Activated CD4-positive, alpha-beta T cell treated with anti-CD3 and anti-CD28 coated beads, Interleukin-2, amount 10 ng/mL, durations not matched to agents 24 days and 14 days (primary cell): ENCODE measurements at regions of chr19 and their contacts with region 1.

Region 1: GRCh38 chr19:6801485-6802086 is 29.1 kb downstream of the VAV1 start:
- DNase-seq: peak; percentile 93
- H3K4me3 Mint-ChIP-seq: peak overlapping the region; percentile 93
- H3K27ac Mint-ChIP-seq: peak overlapping the region; percentile 99
- H3K4me1 Mint-ChIP-seq: peaks cover 55% of the 10 kb centered on the region
- H3K27me3 Mint-ChIP-seq: no peaks in the 10 kb centered on the region

Region 2: GRCh38 chr19:6663236-6664201 is 138.1 kb before region 1 on chr19:
- intact Hi-C with region 1: loop called (anchors 5 kb)
- DNase-seq: no peak
- H3K4me3 Mint-ChIP-seq: peak overlapping the region; percentile 39
- H3K27ac Mint-ChIP-seq: no peak overlapping the region
- H3K4me1 Mint-ChIP-seq: peaks cover 46% of the 10 kb centered on the region
- H3K27me3 Mint-ChIP-seq: no peaks in the 10 kb centered on the region

Region 3: GRCh38 chr19:6767357-6768235 is 34.0 kb before region 1 on chr19 and contains the start of gene SH2D3A:
- intact Hi-C with region 1: loop called (anchors 1 kb)
- DNase-seq: peak; percentile 98
- H3K4me3 Mint-ChIP-seq: peak within 1 kb of the TSS; percentile 88
- H3K27ac Mint-ChIP-seq: peak within 1 kb of the TSS; percentile 92
- H3K4me1 Mint-ChIP-seq: peaks cover 46% of the 10 kb centered on the region
- H3K27me3 Mint-ChIP-seq: no peaks in the 10 kb centered on the region
- total RNA-seq, gene SH2D3A: 9.8 and 11.0 TPM in 2 replicates

Region 4: GRCh38 chr19:6773323-6773931 is 28.2 kb before region 1 on chr19:
- intact Hi-C with region 1: loop called (anchors 1 kb)
- DNase-seq: peak; percentile 86
- H3K4me3 Mint-ChIP-seq: peak overlapping the region; percentile 99
- H3K27ac Mint-ChIP-seq: peak overlapping the region; percentile 95
- H3K4me1 Mint-ChIP-seq: peaks cover 52% of the 10 kb centered on the region
- H3K27me3 Mint-ChIP-seq: no peaks in the 10 kb centered on the region

Region 5: DNA sequence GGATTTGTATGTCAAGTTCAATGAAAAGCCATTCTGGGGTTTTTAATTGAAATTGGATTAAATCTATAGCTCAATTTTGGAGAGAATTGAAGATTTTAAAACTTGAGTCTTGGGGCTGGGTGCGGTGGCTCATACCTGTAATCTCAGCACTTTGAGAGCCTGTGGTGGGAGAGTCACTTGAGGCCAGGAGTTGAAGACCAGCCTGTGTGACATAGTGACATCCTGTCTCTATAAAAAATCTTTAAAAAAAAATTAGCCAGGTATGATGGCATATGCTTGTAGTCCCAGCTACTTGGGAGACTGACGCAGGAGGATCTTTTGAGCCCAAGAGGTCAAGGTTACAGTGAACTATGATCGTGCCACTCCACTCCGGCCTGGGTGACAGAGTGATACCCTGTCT is 12.1 kb after region 1 on chr19:
- intact Hi-C with region 1: loop called (anchors 1 kb)
- DNase-seq: no peak
- H3K4me3 Mint-ChIP-seq: no peak overlapping the region
- H3K27ac Mint-ChIP-seq: no peak overlapping the region
- H3K4me1 Mint-ChIP-seq: peaks cover 49% of the 10 kb centered on the region
- H3K27me3 Mint-ChIP-seq: no peaks in the 10 kb centered on the region

Region 6: GRCh38 chr19:6952956-6953355 is 151.4 kb after region 1 on chr19:
- intact Hi-C with region 1: no loop called
- DNase-seq: no peak
- H3K4me3 Mint-ChIP-seq: no peak overlapping the region
- H3K27ac Mint-ChIP-seq: no peak overlapping the region
- H3K4me1 Mint-ChIP-seq: peaks cover 2% of the 10 kb centered on the region
- H3K27me3 Mint-ChIP-seq: peaks cover 2% of the 10 kb centered on the region

Region 7: GRCh38 chr19:7224209-7224686 is 422.7 kb after region 1 on chr19:
- intact Hi-C with region 1: no loop called
- DNase-seq: no peak
- H3K4me3 Mint-ChIP-seq: no peak overlapping the region
- H3K27ac Mint-ChIP-seq: no peak overlapping the region
- H3K4me1 Mint-ChIP-seq: no peaks in the 10 kb centered on the region
- H3K27me3 Mint-ChIP-seq: no peaks in the 10 kb centered on the region